Mammary epithelial cell (primary cell): ENCODE measurements at regions of chr16 and their contacts with region 1.

Region 1: DNA sequence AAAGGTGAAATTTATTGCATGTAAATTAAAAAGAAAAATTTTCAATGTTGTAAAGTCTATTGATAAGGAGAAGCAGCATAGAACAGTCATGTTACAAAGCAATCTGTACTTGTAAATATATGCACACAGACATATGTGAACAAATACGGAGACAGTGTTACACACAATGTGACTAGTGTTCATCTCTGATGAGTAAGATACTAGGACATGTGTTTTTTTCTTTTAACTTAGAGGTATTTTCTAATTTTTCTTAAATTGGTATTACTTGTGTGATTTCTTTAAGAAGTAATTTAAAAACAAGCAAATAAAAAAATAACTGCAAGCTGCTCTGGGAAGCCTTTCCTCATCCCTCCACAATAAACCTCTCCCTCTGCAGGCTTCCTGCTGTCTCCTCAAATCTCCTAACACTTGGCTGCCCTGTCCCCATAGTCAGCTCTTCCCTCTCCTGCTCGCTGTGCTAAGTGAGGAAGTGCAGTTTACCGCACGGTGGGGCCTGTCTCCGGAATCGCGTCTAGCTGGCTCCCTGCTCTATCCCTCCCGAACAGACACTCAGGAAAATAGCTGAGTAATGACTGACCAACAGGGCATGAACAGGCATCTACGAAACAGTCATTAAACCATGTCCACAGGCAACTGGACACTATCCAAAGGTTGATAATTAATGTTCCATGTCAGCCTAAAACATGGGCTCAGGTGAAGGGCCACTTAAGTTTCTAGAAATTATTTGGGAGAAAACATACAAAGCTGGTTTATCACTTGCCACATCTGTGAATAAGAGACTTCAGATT is 35.9 kb downstream of the CMTM4 start:
- DNase-seq: peak; percentile 85
- H3K4me3 ChIP-seq: no peak overlapping the region
- H3K27ac ChIP-seq: peak overlapping the region; percentile 74
- H3K4me1 ChIP-seq: peaks cover 42% of the 10 kb centered on the region
- H3K27me3 ChIP-seq: no peaks in the 10 kb centered on the region
- CTCF ChIP-seq: peak in 1 of 2 donors; percentile 39

Region 2: GRCh38 chr16:65583498-65583897 is 1077.1 kb before region 1 on chr16:
- CTCF ChIA-PET with region 1: no interaction called
- dilution Hi-C with region 1: no loop called
- in situ Hi-C with region 1: no loop called
- intact Hi-C with region 1: no loop called
- DNase-seq: no peak
- H3K4me3 ChIP-seq: no peak overlapping the region
- H3K27ac ChIP-seq: no peak overlapping the region
- H3K4me1 ChIP-seq: no peaks in the 10 kb centered on the region
- H3K27me3 ChIP-seq: no peaks in the 10 kb centered on the region
- CTCF ChIP-seq: no peak

Region 3: DNA sequence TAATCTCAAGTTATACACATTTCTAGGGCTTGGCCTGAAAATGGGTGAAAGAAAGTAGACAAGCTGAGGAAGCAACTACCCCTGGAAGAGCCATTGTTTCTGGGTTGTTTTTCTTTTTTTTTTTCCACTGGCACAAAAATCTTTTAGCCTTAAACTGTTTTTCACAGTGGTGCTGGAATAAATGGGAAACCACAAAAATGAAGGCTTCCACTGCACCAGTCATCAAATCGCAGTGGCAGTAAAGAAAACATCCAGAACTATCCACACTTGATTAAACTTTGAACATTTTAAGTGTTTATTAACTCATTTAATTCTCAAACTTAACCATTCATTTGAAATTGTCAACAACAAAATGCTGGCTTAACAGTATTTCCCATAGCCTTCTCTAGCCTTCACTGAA is 21.7 kb after region 1 on chr16:
- CTCF ChIA-PET with region 1: no interaction called
- dilution Hi-C with region 1: no loop called
- in situ Hi-C with region 1: no loop called
- intact Hi-C with region 1: loop called (anchors 2 kb)
- DNase-seq: no peak
- H3K4me3 ChIP-seq: no peak overlapping the region
- H3K27ac ChIP-seq: no peak overlapping the region
- H3K4me1 ChIP-seq: peaks cover 13% of the 10 kb centered on the region
- H3K27me3 ChIP-seq: no peaks in the 10 kb centered on the region
- CTCF ChIP-seq: no peak

Region 4: GRCh38 chr16:66714654-66715307 is 54.2 kb after region 1 on chr16:
- CTCF ChIA-PET with region 1: no interaction called
- dilution Hi-C with region 1: no loop called
- in situ Hi-C with region 1: no loop called
- intact Hi-C with region 1: loop called (anchors 5 kb)
- DNase-seq: peak; percentile 82
- H3K4me3 ChIP-seq: no peak overlapping the region
- H3K27ac ChIP-seq: no peak overlapping the region
- H3K4me1 ChIP-seq: peaks cover 34% of the 10 kb centered on the region
- H3K27me3 ChIP-seq: no peaks in the 10 kb centered on the region
- CTCF ChIP-seq: no peak

Region 5: GRCh38 chr16:66740010-66740409 is 79.4 kb after region 1 on chr16:
- CTCF ChIA-PET with region 1: interaction called, 3 read pairs
- dilution Hi-C with region 1: loop called (anchors 5 kb)
- in situ Hi-C with region 1: no loop called
- intact Hi-C with region 1: loop called (anchors 5 kb)
- DNase-seq: peak; percentile 23
- H3K4me3 ChIP-seq: no peak overlapping the region
- H3K27ac ChIP-seq: no peak overlapping the region
- H3K4me1 ChIP-seq: peaks cover 34% of the 10 kb centered on the region
- H3K27me3 ChIP-seq: no peaks in the 10 kb centered on the region
- CTCF ChIP-seq: peak; percentile 59 to 72